CD4-positive, alpha-beta T cell (primary cell): ENCODE measurements at regions of chr2 and their contacts with region 1.

Region 1: DNA sequence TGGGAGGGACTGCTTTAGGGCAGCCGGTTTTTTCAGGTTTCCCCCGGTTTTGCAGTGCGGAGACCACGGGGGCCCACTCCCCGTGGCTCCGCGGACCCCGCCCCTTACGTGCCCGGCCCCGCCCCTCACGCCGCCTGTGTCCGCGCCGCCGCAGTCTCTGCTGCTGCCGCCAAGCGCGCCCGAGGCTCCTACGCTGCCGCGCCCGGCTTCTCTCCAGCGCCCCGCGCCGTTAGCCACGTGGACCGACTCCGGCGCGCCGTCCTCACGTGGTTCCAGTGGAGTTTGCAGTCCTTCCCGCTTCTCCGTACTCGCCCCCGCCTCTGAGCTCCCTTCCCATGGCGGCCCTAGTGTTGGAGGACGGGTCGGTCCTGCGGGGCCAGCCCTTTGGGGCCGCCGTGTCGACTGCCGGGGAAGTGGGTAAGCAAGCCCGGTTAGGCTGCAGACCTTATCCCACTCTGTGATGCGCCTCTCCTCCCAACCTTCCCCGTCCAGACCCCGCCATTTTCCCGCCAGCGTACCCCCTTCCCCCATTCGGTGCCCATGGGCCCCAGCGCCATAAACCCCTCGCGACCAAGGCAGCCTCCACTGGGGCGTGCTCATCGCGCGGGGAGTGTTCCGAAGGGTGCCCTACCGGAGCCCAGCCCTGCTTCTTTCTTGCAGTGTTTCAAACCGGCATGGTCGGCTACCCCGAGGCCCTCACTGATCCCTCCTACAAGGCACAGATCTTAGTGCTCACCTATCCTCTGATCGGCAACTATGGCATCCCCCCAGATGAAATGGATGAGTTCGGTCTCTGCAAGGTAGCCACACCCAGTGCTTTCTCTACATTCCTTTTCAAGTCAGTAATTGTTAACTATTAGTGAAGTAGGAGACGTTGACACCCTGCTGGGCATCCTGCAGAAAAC is at the start of gene CAD:
- DNase-seq: peak; percentile 75 to 94 (median 84)
- ATAC-seq: peak; percentile 74
- H3K4me3 ChIP-seq: peak within 1 kb of the TSS; percentile 87
- H3K4me3 Mint-ChIP-seq: peak within 1 kb of the TSS; percentile 98
- H3K27ac ChIP-seq: peak within 1 kb of the TSS; percentile 67 to 75
- H3K27ac Mint-ChIP-seq: peak within 1 kb of the TSS; percentile 93
- H3K4me1 ChIP-seq: peaks cover 31% of the 10 kb centered on the region
- H3K4me1 Mint-ChIP-seq: peaks cover 45% of the 10 kb centered on the region
- H3K27me3 ChIP-seq: no peaks in the 10 kb centered on the region
- H3K27me3 Mint-ChIP-seq: no peaks in the 10 kb centered on the region
- CTCF ChIP-seq: no peak
- total RNA-seq, gene CAD: 20.0 to 20.3 TPM

Region 2: GRCh38 chr2:26785431-26786206 is 431.9 kb before region 1 on chr2 and contains the start of gene CENPA:
- CTCF ChIA-PET with region 1: no interaction called
- POLR2A ChIA-PET with region 1: interaction called, 3 read pairs
- intact Hi-C with region 1: loop called in 1 of 2 experiments (anchors 10 kb)
- DNase-seq: peak; percentile 91 to 99 (median 93)
- ATAC-seq: peak; percentile 98
- H3K4me3 ChIP-seq: peak within 1 kb of the TSS; percentile 65
- H3K4me3 Mint-ChIP-seq: peak within 1 kb of the TSS; percentile 87
- H3K27ac ChIP-seq: peak within 1 kb of the TSS; percentile 23 to 34
- H3K27ac Mint-ChIP-seq: peak within 1 kb of the TSS; percentile 85
- H3K4me1 ChIP-seq: peaks cover 19% of the 10 kb centered on the region
- H3K4me1 Mint-ChIP-seq: peaks cover 11% of the 10 kb centered on the region
- H3K27me3 ChIP-seq: no peaks in the 10 kb centered on the region
- H3K27me3 Mint-ChIP-seq: peaks cover 26% of the 10 kb centered on the region
- CTCF ChIP-seq: peak; percentile 5
- total RNA-seq, gene CENPA: 1.0 to 1.1 TPM

Region 3: GRCh38 chr2:27086090-27086723 is 131.3 kb before region 1 on chr2:
- CTCF ChIA-PET with region 1: no interaction called
- POLR2A ChIA-PET with region 1: interaction called, 12 read pairs
- intact Hi-C with region 1: loop called (anchors 1 to 2 kb)
- DNase-seq: peak; percentile 91 to 99 (median 98)
- ATAC-seq: peak; percentile 92
- H3K4me3 ChIP-seq: peak overlapping the region; percentile 70
- H3K4me3 Mint-ChIP-seq: peak overlapping the region; percentile 91
- H3K27ac ChIP-seq: peak overlapping the region; percentile 65 to 70
- H3K27ac Mint-ChIP-seq: peak overlapping the region; percentile 81
- H3K4me1 ChIP-seq: peaks cover 50% of the 10 kb centered on the region
- H3K4me1 Mint-ChIP-seq: peaks cover 32% of the 10 kb centered on the region
- H3K27me3 ChIP-seq: no peaks in the 10 kb centered on the region
- H3K27me3 Mint-ChIP-seq: no peaks in the 10 kb centered on the region
- CTCF ChIP-seq: peak; percentile 75

Region 4: DNA sequence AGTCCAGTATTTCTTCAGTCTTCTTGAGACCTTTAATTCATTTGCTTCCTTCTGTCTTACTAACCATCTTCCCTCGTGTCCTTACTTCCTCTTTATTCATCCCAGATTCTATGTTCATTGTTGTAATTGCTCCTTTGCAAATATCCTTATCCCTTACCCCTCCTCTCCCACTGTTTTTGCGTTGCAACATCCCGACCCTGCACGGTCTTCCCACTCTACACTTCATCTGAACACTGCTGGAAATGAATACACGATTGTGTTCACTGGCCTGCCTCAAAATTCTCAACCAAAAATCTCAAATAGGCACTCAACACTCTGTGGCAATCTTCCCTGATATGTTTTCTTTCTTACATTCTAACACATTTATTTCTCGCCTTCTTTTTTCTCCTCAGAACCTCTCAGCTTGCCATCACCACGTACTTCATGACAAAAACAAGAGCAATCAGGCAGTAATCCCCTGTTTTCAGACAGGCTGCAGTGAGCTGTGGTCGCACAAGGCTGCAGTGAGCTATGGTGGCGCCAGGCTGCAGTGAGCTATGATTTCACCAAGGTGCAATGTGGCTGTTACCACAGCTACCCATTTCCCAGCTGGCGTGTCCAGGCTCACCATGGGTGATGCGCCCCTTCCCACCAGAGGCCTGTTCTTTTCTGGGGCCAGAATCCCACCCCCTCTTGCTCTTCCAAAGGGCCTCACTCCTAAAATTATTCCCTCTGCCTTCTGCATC is 43.0 kb before region 1 on chr2:
- CTCF ChIA-PET with region 1: interaction called, 4 read pairs
- POLR2A ChIA-PET with region 1: no interaction called
- intact Hi-C with region 1: loop called in 1 of 2 experiments (anchors 2 kb)
- DNase-seq: no peak
- ATAC-seq: no peak
- H3K4me3 ChIP-seq: no peak overlapping the region
- H3K4me3 Mint-ChIP-seq: no peak overlapping the region
- H3K27ac ChIP-seq: no peak overlapping the region
- H3K27ac Mint-ChIP-seq: no peak overlapping the region
- H3K4me1 ChIP-seq: peaks cover 8% of the 10 kb centered on the region
- H3K4me1 Mint-ChIP-seq: peaks cover 4% of the 10 kb centered on the region
- H3K27me3 ChIP-seq: peaks cover 3 to 7% of the 10 kb centered on the region in 2 experiments
- H3K27me3 Mint-ChIP-seq: peaks cover 44% of the 10 kb centered on the region
- CTCF ChIP-seq: no peak

Region 5: GRCh38 chr2:27489498-27490397 is 272.3 kb after region 1 on chr2 and contains the start of gene IFT172:
- CTCF ChIA-PET with region 1: no interaction called
- POLR2A ChIA-PET with region 1: no interaction called
- intact Hi-C with region 1: loop called in 1 of 2 experiments (anchors 2 kb)
- DNase-seq: peak; percentile 97 to 100 (median 99)
- ATAC-seq: peak; percentile 85
- H3K4me3 ChIP-seq: peak within 1 kb of the TSS; percentile 61
- H3K4me3 Mint-ChIP-seq: peak within 1 kb of the TSS; percentile 80
- H3K27ac ChIP-seq: peak within 1 kb of the TSS; percentile 55 to 91
- H3K27ac Mint-ChIP-seq: peak within 1 kb of the TSS; percentile 93
- H3K4me1 ChIP-seq: peaks cover 20% of the 10 kb centered on the region
- H3K4me1 Mint-ChIP-seq: peaks cover 18% of the 10 kb centered on the region
- H3K27me3 ChIP-seq: peaks cover 11 to 13% of the 10 kb centered on the region in 2 experiments
- H3K27me3 Mint-ChIP-seq: peaks cover 12% of the 10 kb centered on the region
- CTCF ChIP-seq: no peak
- total RNA-seq, gene IFT172: 13.3 to 14.4 TPM